ENCODE measurements at regions of chr22 and their contacts with region 1.

Region 1: GRCh38 chr22:45994491-45995404 is 17.8 kb upstream of the WNT7B start:
- DNase-seq: peak; percentile 78
- H3K4me3 Mint-ChIP-seq: no peak overlapping the region
- H3K27ac Mint-ChIP-seq: no peak overlapping the region
- H3K4me1 Mint-ChIP-seq: peaks cover 2% of the 10 kb centered on the region
- H3K27me3 Mint-ChIP-seq: peaks cover 4% of the 10 kb centered on the region

Region 2: DNA sequence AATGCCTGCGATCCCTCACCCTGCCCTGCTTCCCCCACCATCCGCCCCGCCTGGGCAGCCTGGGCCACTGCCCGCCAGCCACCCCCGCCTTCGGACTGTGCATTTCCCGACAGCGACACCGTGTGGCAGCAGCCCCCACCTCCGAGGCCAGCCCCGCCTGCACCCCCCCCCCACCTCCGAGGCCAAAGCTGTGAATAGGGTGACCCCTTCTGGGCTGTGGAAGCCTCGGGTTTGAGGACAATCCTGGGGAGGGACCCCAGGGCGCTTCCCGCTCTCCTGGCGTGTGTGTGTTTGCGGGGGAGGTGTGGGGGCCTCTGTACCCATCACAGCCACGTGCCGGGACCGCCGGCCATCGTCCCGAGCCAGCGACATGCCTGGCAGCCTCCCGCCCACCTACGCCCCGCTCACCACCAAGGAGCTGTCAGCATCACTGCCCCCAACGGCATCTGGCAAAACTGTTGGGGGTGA is 121.8 kb after region 1 on chr22:
- CTCF ChIA-PET with region 1: interaction called, 18 read pairs
- POLR2A ChIA-PET with region 1: no interaction called
- DNase-seq: peak; percentile 89
- H3K4me3 Mint-ChIP-seq: no peak overlapping the region
- H3K27ac Mint-ChIP-seq: no peak overlapping the region
- H3K4me1 Mint-ChIP-seq: peaks cover 4% of the 10 kb centered on the region
- H3K27me3 Mint-ChIP-seq: no peaks in the 10 kb centered on the region